Heart right ventricle (tissue), 16 donors: ENCODE measurements at regions of chr11 and their contacts with region 1.

Region 1: DNA sequence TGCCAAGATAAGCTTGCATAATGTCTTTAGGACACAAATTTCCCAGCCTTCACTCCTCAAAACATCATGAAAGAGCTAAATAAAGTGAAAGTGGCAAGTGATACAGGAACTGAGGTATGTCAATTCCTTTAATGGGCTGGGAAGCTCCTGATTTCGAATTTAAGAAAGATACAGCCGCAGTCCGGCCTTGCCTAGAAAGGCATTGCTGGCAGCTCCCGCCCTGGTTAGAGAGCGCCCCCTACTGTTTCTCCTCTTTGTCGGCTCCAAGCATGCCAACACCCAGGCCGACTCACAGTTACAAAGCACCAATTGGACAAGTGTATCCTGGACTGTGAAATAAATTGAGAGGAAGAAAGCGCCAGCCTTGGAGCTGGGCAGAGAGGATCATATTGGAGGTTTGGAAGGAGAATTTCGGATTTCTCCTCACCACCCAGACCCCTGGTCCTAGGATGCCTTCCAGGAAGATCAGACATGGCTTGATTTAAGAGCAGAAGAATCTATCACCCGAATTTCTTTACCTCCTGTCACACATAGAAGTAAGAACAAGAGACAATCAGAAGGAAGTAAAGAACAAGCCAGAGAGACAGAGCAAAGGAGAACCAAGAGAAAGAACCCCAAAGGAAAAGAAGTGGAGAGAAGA is 84.0 kb downstream of the FAM76B start:
- DNase-seq: peak; percentile 78 to 91
- ATAC-seq: peak; percentile 94 to 99 (median 98)
- H3K4me3 ChIP-seq: no peak overlapping the region
- H3K27ac ChIP-seq: peak overlapping the region in 8 of 10 donors; percentile 20 to 56 (median 34)
- H3K4me1 ChIP-seq: peaks cover 0 to 37% (median 10%) of the 10 kb centered on the region in 9 donors
- H3K27me3 ChIP-seq: no peaks in the 10 kb centered on the region
- CTCF ChIP-seq: peak; percentile 90 to 99 (median 96)

Region 2: GRCh38 chr11:95067039-95067840 is 638.4 kb before region 1 on chr11:
- intact Hi-C with region 1: loop called in 3 of 10 experiments (anchors 10 kb)
- DNase-seq: peak; percentile 83 to 88
- ATAC-seq: peak; percentile 87 to 95 (median 90)
- H3K4me3 ChIP-seq: peak overlapping the region; percentile 72 to 89 (median 82)
- H3K27ac ChIP-seq: peak overlapping the region; percentile 94 to 99 (median 97)
- H3K4me1 ChIP-seq: peaks cover 0 to 27% (median 20%) of the 10 kb centered on the region in 9 donors
- H3K27me3 ChIP-seq: no peaks in the 10 kb centered on the region
- CTCF ChIP-seq: peak; percentile 50 to 77 (median 61)

Region 3: GRCh38 chr11:95231127-95231880 is 474.3 kb before region 1 on chr11 and contains the start of gene SESN3:
- intact Hi-C with region 1: loop called in 8 of 10 experiments (anchors 1 to 10 kb)
- DNase-seq: peak; percentile 98 to 99
- ATAC-seq: peak; percentile 94 to 99 (median 98)
- H3K4me3 ChIP-seq: peak within 1 kb of the TSS; percentile 63 to 94 (median 84)
- H3K27ac ChIP-seq: peak within 1 kb of the TSS; percentile 70 to 90 (median 88)
- H3K4me1 ChIP-seq: peaks cover 0 to 37% (median 21%) of the 10 kb centered on the region in 9 donors
- H3K27me3 ChIP-seq: no peaks in the 10 kb centered on the region
- CTCF ChIP-seq: peak in 3 of 9 donors; percentile 38 to 45 (median 39)
- total RNA-seq, gene SESN3: 2.6 to 15.4 (median 10.2) TPM

Region 4: DNA sequence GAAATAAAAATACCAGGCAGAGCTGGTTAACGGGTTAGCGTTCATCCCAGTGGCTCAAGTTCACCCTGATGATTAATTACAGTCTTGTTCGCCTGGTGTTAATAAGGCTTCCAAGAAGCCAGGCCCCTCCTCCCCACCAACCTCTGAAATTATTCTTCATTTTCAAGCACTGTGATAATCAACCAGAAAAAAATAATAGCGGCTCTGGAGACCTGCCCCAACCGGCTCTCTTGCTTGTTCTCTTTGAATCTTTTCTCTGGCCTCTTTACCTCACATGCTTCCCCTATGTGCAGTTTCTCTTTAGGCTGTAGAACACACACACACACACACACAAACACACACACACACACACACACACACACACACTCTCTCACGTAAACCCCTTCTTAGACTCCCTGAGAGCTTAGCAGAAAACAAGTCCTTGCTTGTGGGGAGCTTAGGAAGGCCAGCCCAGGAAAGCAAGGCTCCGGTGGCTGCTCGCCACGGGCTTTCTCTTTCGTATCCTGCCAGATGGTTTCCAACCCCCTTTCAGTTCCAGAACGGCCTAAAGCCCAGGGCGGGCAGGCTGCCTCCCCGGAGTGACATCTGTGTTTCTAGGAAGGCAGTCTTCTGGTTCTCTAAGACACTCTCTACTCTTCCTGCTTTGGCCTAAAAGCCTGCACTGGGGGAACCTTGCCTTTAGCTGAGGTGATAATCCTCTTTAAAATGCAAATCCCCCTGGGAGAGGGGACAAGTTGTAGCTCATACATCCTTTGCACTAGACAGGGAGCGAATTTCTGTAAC is 368.2 kb before region 1 on chr11:
- intact Hi-C with region 1: loop called in 3 of 10 experiments (anchors 5 to 10 kb)
- DNase-seq: peak; percentile 68 to 81
- ATAC-seq: peak; percentile 62 to 89 (median 80)
- H3K4me3 ChIP-seq: peak overlapping the region in 1 of 10 donors; percentile 19
- H3K27ac ChIP-seq: peak overlapping the region; percentile 64 to 91 (median 82)
- H3K4me1 ChIP-seq: peaks cover 17 to 44% (median 33%) of the 10 kb centered on the region in 9 donors
- H3K27me3 ChIP-seq: no peaks in the 10 kb centered on the region
- CTCF ChIP-seq: no peak

Region 5: GRCh38 chr11:95512682-95513081 is 192.9 kb before region 1 on chr11:
- intact Hi-C with region 1: loop called in 1 of 10 experiments (anchors 10 kb)
- DNase-seq: peak in 1 of 2 donors; percentile 49
- ATAC-seq: peak; percentile 65 to 92 (median 76)
- H3K4me3 ChIP-seq: no peak overlapping the region
- H3K27ac ChIP-seq: peak overlapping the region in 3 of 10 donors; percentile 15 to 26 (median 24)
- H3K4me1 ChIP-seq: peaks cover 0 to 22% (median 4%) of the 10 kb centered on the region in 9 donors
- H3K27me3 ChIP-seq: no peaks in the 10 kb centered on the region
- CTCF ChIP-seq: no peak

Region 6: DNA sequence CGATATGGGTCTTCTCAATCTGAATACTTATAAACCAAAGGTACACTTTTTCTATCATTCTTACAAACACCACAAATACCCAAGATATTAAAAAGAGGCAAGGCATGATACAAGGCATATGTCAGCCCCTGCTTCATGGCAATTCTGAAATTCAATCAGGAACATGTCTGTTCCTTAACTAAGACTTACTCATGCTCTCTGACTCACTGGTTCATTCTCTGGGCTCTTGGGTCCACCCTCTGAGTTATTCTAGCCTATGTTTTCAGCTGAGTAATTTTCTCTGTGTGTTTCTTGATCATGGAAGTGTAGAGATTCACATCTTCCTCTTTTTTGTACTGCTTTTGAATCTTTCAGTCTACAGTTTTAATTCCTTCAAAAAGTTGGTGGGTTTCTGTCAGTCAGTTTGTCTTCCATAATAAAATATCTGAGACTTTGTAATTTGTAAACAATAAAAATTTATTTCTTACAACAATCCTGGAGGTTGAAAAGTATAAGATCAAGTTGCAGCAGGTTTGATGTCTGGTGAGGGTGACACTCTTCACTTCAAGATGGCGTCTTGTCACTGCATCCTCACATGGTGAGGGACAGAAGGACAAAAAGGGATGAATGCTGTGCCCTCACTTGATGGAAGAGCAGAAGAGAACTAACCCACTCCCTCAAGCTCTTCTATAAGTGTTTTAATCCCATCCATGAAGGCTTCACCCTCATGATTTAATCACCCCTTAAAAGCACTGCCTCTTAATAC is 127.7 kb before region 1 on chr11:
- intact Hi-C with region 1: loop called in 2 of 10 experiments (anchors 1 to 10 kb)
- DNase-seq: no peak
- ATAC-seq: peak in 2 of 8 donors; percentile 42 to 53
- H3K4me3 ChIP-seq: no peak overlapping the region
- H3K27ac ChIP-seq: no peak overlapping the region
- H3K4me1 ChIP-seq: peaks cover 0 to 18% (median 0%) of the 10 kb centered on the region in 9 donors
- H3K27me3 ChIP-seq: no peaks in the 10 kb centered on the region
- CTCF ChIP-seq: peak in 1 of 9 donors; percentile 25

Region 7: DNA sequence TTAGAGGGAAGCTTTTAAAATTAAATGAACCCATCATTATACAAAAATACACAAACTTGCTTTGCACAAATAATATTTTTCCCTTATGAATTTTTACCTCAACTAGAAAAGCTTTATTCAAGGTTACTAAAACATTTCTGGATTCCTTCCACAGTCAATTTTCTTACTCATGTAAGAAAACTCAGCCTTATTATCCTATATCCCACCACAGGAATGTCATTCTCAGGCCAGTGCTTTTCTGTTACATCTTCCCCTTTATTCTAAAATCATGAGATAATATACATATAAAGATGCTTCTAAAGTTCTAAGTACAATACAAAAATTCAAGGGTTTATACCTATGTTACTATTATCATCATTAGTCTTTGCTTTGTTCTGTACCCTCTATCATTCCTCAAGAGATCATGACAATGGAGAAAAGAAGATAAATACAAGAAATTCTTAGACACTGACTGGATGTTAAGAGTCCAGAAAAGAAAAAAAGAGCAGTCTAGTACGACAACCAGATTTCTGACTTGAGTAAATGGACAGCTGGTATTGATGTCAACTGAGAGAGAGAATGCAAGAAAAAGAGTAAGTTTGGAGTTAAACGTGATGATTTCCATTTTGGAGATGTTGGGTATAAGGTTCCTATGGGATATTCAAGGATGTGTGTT is 158.0 kb after region 1 on chr11:
- intact Hi-C with region 1: no loop called
- DNase-seq: no peak
- ATAC-seq: no peak
- H3K4me3 ChIP-seq: no peak overlapping the region
- H3K27ac ChIP-seq: no peak overlapping the region
- H3K4me1 ChIP-seq: no peaks in the 10 kb centered on the region
- H3K27me3 ChIP-seq: no peaks in the 10 kb centered on the region
- CTCF ChIP-seq: no peak